CD14-positive monocyte (primary cell): ENCODE measurements at regions of chr13 and their contacts with region 1.

Region 1: GRCh38 chr13:95684418-95684817 is 7.5 kb downstream of the DNAJC3 start:
- DNase-seq: no peak
- H3K4me3 ChIP-seq: no peak overlapping the region
- H3K4me3 Mint-ChIP-seq: peak overlapping the region in 1 of 2 donors; percentile 5
- H3K27ac ChIP-seq: peak overlapping the region in 1 of 2 donors; percentile 66
- H3K27ac Mint-ChIP-seq: peak overlapping the region in 6 of 7 donors; percentile 40 to 91 (median 78)
- H3K4me1 ChIP-seq: peaks cover 34 to 38% of the 10 kb centered on the region in 2 donors
- H3K4me1 Mint-ChIP-seq: peaks cover 84% of the 10 kb centered on the region
- H3K27me3 ChIP-seq: no peaks in the 10 kb centered on the region
- H3K27me3 Mint-ChIP-seq: peaks cover 0 to 1% (median 0%) of the 10 kb centered on the region in 3 donors
- CTCF ChIP-seq: no peak

Region 2: GRCh38 chr13:95763601-95764000 is 79.2 kb after region 1 on chr13:
- intact Hi-C with region 1: loop called in 1 of 2 experiments (anchors 10 kb)
- DNase-seq: no peak
- H3K4me3 ChIP-seq: no peak overlapping the region
- H3K4me3 Mint-ChIP-seq: no peak overlapping the region
- H3K27ac ChIP-seq: no peak overlapping the region
- H3K27ac Mint-ChIP-seq: no peak overlapping the region
- H3K4me1 ChIP-seq: peaks cover 0 to 2% of the 10 kb centered on the region in 2 donors
- H3K4me1 Mint-ChIP-seq: peaks cover 5% of the 10 kb centered on the region
- H3K27me3 ChIP-seq: no peaks in the 10 kb centered on the region
- H3K27me3 Mint-ChIP-seq: no peaks in the 10 kb centered on the region
- CTCF ChIP-seq: no peak

Region 3: DNA sequence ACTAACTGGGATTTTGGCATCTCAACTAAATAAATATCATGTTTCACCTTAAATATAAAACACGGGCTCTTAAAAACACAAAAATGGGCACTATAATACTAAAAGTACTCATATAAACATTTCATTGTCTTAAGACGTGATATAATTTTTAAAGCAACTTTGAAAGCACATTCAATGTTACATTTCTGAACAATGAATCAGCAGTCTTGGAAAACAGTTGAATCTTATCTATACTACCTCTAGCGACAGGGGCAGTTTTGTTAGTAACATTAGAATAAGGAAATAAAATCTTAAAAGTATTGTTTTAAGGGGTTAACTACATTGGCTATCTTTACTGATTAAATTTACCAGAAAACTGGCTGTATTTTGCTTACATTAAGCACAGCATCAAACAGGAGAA is 211.9 kb after region 1 on chr13:
- intact Hi-C with region 1: no loop called
- DNase-seq: no peak
- H3K4me3 ChIP-seq: no peak overlapping the region
- H3K4me3 Mint-ChIP-seq: no peak overlapping the region
- H3K27ac ChIP-seq: no peak overlapping the region
- H3K27ac Mint-ChIP-seq: no peak overlapping the region
- H3K4me1 ChIP-seq: no peaks in the 10 kb centered on the region
- H3K4me1 Mint-ChIP-seq: no peaks in the 10 kb centered on the region
- H3K27me3 ChIP-seq: no peaks in the 10 kb centered on the region
- H3K27me3 Mint-ChIP-seq: no peaks in the 10 kb centered on the region
- CTCF ChIP-seq: no peak